ENCODE measurements at regions of chr5 and their contacts with region 1.

Region 1: DNA sequence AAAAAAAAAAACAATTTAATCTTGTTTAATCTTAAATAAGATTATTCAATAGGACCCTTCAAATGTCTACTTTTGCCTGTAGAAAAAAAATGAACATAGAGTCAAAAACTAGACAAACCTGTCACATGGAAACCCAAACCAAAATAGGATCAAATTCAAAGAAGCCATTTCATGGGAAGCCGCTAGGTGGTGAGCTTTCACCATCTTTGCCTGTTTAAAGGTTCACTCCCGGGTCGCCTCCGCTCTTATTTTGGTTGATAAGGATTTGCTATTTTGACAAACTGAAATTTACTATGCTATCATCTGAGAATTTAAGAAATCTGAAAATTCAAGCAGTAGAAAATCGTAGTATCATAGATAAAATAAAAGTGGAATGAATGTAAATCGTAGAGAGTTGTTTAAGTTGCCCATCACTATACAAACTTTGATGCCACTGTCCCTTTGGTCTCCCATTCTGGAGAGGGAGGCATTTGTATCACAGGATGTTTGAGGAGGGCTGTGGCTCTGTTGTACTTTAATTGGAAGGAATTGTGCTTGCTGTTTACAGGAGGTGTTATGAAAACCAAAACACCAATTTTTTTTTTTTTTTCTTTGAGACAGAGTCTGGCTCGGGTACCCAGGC is 43.5 kb upstream of the DNAH5 start:
- DNase-seq: peak; percentile 68
- H3K4me3 ChIP-seq: no peak overlapping the region
- CTCF ChIP-seq: peak; percentile 75

Region 2: DNA sequence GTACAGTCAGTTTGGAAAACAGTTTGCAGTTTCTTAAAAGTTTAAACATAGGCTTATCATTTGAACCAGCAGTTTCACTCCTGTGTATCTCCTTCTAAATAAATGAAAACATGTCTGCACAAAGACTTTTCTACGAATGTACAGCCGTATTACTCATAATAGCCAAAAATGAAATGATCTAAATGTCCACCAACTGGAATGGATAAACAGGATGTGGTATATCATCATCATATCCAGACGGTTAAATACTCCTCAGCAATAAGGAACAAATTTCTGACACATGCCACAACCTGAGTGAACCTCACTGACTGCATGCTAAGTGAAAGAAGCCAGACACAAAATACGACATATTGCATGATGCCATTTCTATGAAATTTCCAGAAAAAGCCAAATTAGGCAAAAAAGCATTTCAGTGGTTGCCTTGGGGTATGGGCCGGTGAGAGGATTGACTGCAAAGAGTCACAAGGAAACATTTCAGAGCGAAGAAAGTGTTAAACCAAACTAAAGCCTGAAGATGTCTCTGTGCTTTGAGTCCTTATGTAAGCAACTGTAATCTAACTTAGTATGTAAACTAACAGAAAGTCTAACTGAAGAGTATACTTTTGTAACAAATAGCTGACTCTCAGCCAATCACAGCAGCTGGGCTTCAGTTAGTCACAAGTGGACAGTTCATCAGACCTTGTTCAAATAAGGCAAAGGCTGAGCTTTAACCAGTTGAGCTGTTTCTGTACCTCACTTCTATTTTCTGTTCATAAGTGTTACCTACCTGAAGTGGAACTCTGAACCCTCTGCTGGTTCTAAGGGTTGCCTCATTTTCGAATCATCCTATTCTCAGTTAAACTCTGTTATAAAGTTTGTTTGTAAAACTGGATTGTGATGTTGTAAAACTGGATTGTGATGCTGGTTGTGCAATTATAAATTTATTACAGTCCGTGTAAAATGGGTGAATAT is 220.4 kb after region 1 on chr5:
- in situ Hi-C with region 1: no loop called
- DNase-seq: peak; percentile 89
- H3K4me3 ChIP-seq: no peak overlapping the region
- CTCF ChIP-seq: no peak

Region 3: DNA sequence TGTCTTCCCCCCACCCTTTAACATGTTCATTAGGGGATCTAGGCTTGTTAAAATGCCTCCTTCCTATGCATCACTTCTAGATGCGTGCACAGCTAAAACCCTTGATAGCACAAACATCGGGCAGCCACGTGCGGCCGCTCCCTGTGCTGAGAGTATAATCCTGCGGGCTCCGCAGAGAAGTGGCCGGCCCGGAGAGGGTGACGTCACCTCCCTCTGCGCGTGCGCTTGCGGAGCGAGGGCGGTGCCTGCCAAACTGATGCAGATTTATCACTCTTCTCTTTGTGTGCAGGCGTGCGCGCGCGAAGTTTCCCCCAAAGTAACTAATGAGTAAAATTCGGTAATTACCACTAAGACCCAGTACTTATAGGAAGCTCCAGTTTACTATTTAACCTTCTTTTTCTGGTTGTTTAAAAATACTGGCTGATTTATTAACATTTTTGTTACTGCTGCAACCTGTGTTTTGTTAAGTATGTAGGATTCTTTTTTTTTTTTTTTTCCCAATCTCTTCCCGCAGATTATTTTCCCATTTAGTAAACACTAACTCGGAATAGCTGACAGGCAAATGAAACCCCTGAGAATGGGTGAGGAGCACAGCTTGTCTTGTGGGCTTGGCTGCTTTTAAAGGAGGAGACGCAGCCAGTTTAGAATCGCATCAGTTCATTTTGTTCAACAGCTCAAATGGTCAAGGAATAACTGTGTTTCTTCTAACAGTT is 276.8 kb after region 1 on chr5:
- in situ Hi-C with region 1: loop called (anchors 25 kb)
- DNase-seq: peak; percentile 94
- H3K4me3 ChIP-seq: no peak overlapping the region
- CTCF ChIP-seq: no peak

Region 4: GRCh38 chr5:14351845-14352712 is 364.1 kb after region 1 on chr5:
- in situ Hi-C with region 1: loop called (anchors 25 kb)
- DNase-seq: peak; percentile 67
- H3K4me3 ChIP-seq: no peak overlapping the region
- CTCF ChIP-seq: peak; percentile 100